ENCODE measurements at regions of chr11 and their contacts with region 1.

Region 1: GRCh38 chr11:79100093-79100910 is 340.5 kb downstream of the TENM4 start:
- DNase-seq: peak; percentile 65
- ATAC-seq: peak; percentile 80
- H3K4me3 Mint-ChIP-seq: no peak overlapping the region
- H3K27ac Mint-ChIP-seq: no peak overlapping the region
- H3K4me1 Mint-ChIP-seq: no peaks in the 10 kb centered on the region
- H3K27me3 Mint-ChIP-seq: peaks cover 23% of the 10 kb centered on the region

Region 2: DNA sequence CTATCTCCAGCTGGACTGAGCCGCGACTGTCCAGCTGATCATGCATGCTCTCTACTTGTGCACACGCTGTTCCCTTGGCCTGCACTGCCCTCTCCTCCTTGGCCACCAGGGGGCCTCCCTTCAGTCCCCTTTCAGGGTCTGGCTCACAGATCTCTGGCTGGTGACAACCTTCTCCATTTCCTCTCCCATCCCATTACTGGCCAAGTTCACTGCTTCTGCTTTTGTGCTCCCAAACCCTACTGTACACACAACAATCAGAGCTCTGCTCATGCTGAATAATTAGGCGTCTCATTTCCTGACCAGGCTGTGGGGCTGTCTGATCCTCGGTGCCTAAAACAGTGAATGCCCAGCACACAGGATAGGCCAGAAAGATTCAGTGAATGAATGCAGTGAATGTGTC is 301.6 kb before region 1 on chr11:
- CTCF ChIA-PET with region 1: interaction called, 4 read pairs
- POLR2A ChIA-PET with region 1: no interaction called
- intact Hi-C with region 1: loop called in 1 of 2 experiments (anchors 1 kb)
- DNase-seq: peak; percentile 72
- ATAC-seq: peak; percentile 74
- H3K4me3 Mint-ChIP-seq: no peak overlapping the region
- H3K27ac Mint-ChIP-seq: no peak overlapping the region
- H3K4me1 Mint-ChIP-seq: no peaks in the 10 kb centered on the region
- H3K27me3 Mint-ChIP-seq: peaks cover 8% of the 10 kb centered on the region